CD8-positive, alpha-beta T cell (primary cell): ENCODE measurements at regions of chr2 and their contacts with region 1.

Region 1: GRCh38 chr2:96656540-96656939 is 14.0 kb downstream of the FER1L5 start:
- DNase-seq: no peak
- ATAC-seq: no peak
- H3K4me3 ChIP-seq: no peak overlapping the region
- H3K4me3 Mint-ChIP-seq: no peak overlapping the region
- H3K27ac ChIP-seq: no peak overlapping the region
- H3K27ac Mint-ChIP-seq: no peak overlapping the region
- H3K4me1 ChIP-seq: no peaks in the 10 kb centered on the region
- H3K4me1 Mint-ChIP-seq: no peaks in the 10 kb centered on the region
- H3K27me3 ChIP-seq: no peaks in the 10 kb centered on the region
- H3K27me3 Mint-ChIP-seq: no peaks in the 10 kb centered on the region
- CTCF ChIP-seq: no peak

Region 2: GRCh38 chr2:96625571-96626552 is 30.7 kb before region 1 on chr2:
- CTCF ChIA-PET with region 1: no interaction called
- POLR2A ChIA-PET with region 1: no interaction called
- intact Hi-C with region 1: loop called in 1 of 2 experiments (anchors 1 kb)
- DNase-seq: no peak
- ATAC-seq: no peak
- H3K4me3 ChIP-seq: no peak overlapping the region
- H3K4me3 Mint-ChIP-seq: no peak overlapping the region
- H3K27ac ChIP-seq: no peak overlapping the region
- H3K27ac Mint-ChIP-seq: no peak overlapping the region
- H3K4me1 ChIP-seq: no peaks in the 10 kb centered on the region
- H3K4me1 Mint-ChIP-seq: peaks cover 29% of the 10 kb centered on the region
- H3K27me3 ChIP-seq: no peaks in the 10 kb centered on the region
- H3K27me3 Mint-ChIP-seq: no peaks in the 10 kb centered on the region
- CTCF ChIP-seq: no peak